ENCODE measurements at regions of chr19 and their contacts with region 1.

Region 1: DNA sequence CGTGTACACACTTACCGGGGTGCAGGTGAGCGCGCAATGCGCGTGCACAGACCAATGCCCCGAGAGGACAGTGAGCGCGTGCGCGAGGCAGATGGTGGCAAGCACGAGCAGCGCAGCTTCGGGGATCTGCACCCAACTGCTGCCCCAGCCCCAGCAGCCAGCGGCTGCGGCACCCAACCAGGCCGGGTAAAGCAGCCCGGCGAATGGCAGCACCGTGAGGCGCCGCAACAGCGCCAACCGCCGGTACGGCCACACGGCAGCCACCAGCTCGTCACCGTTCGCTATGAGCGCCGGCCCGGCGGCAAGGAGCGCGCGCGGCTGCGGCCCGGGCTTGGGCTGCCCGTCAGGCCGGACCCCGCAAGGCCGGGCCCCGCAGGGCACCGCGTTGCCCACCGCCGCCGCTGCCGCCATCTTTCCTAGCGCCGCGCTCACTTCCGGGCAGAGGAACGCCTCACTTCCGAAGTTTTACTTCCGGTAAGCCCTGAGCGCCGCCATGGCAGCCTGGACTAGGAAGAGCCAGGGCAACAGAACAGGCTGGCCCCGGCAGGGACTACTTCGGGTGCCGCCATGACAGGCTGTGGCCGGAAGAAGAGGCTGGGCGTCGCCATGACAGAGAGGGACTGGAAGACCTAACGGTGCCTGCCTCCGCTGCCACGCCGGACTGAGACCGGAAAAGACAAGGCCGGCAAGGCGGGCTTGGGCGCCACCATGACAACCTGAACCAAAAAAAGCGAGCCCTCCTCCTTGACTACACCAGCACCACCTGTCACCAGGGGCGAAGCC is at the start of gene ATP13A1:
- DNase-seq: peak; percentile 90
- ATAC-seq: peak; percentile 78
- H3K4me3 Mint-ChIP-seq: peak within 1 kb of the TSS; percentile 92
- H3K27ac Mint-ChIP-seq: peak within 1 kb of the TSS; percentile 98
- H3K4me1 Mint-ChIP-seq: peaks cover 44% of the 10 kb centered on the region
- H3K27me3 Mint-ChIP-seq: no peaks in the 10 kb centered on the region
- CTCF ChIP-seq: no peak
- total RNA-seq, gene ATP13A1: 125 and 135 TPM in 2 replicates

Region 2: DNA sequence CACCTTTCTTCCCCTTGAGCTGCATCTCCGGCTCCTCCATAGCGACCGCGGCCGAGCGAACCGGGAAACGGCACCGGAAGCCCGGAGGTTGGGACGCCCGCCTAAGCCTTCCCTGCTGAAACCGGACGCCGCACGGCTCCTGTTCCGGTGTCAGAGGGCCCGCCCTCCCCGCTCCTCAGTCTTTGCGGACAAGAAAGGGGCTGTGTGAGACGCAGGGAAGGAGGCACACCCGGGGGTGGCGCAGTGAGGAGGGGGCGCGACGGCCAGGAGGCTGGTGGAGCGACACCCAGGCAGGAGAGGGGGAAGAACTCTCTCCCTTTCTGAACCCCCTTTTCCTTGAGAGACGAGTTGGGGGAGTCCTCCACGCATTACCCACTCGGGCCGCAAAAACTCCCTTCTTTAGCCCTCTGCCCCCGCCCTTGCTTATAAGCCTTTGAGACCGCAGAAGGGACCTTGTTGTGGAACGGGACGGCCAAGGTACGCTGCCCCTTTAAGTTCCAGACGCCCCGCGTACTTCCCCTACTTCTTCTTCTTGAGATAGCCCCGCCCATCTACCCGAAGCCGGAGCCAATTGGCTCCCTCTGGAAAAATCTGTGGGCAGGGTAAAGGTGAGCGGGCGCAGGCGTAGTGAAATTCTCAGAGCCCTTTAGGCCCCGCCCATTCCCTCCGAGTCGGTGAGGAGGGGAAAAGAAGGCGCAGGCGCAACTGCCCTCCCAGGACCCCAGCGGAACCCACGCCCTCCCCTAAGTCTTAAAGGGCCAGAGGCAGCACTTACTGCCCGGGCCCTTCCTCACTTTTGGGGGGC is 471.2 kb before region 1 on chr19 and contains the starts of genes BORCS8 and RFXANK:
- CTCF ChIA-PET with region 1: no interaction called
- POLR2A ChIA-PET with region 1: interaction called, 3 read pairs
- intact Hi-C with region 1: loop called (anchors 1 kb)
- DNase-seq: peak; percentile 91
- ATAC-seq: peak; percentile 85
- H3K4me3 Mint-ChIP-seq: peak within 1 kb of the TSS; percentile 99
- H3K27ac Mint-ChIP-seq: peak within 1 kb of the TSS; percentile 99
- H3K4me1 Mint-ChIP-seq: peaks cover 49% of the 10 kb centered on the region
- H3K27me3 Mint-ChIP-seq: no peaks in the 10 kb centered on the region
- CTCF ChIP-seq: no peak
- total RNA-seq, gene BORCS8: 51.8 and 52.3 TPM in 2 replicates
- total RNA-seq, gene RFXANK: 95.4 and 96.9 TPM in 2 replicates

Region 3: DNA sequence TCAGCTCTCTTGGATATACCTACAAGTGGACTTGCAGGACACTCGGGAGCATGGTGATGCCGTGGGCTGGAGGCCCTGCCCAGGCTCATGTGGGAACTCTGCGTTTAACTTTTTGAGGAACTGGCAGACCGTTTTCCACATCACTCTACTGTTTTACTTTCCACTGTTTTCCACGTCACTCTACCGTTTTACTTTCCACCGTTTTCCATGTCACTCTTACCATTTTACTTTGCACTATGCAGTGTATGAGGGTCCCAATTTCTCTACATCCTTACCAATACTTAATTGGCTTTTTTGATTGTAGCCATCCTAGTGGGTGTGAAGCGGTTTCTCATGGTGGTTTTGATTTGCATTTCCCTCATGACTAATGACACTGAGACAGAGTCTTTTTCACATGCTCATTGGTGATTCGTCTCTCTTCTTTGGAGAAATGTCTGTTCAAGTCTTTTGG is 217.5 kb before region 1 on chr19:
- CTCF ChIA-PET with region 1: no interaction called
- POLR2A ChIA-PET with region 1: no interaction called
- intact Hi-C with region 1: no loop called
- DNase-seq: no peak
- ATAC-seq: peak; percentile 63
- H3K4me3 Mint-ChIP-seq: peak overlapping the region; percentile 71
- H3K27ac Mint-ChIP-seq: peak overlapping the region; percentile 78
- H3K4me1 Mint-ChIP-seq: peaks cover 61% of the 10 kb centered on the region
- H3K27me3 Mint-ChIP-seq: no peaks in the 10 kb centered on the region
- CTCF ChIP-seq: no peak

Region 4: DNA sequence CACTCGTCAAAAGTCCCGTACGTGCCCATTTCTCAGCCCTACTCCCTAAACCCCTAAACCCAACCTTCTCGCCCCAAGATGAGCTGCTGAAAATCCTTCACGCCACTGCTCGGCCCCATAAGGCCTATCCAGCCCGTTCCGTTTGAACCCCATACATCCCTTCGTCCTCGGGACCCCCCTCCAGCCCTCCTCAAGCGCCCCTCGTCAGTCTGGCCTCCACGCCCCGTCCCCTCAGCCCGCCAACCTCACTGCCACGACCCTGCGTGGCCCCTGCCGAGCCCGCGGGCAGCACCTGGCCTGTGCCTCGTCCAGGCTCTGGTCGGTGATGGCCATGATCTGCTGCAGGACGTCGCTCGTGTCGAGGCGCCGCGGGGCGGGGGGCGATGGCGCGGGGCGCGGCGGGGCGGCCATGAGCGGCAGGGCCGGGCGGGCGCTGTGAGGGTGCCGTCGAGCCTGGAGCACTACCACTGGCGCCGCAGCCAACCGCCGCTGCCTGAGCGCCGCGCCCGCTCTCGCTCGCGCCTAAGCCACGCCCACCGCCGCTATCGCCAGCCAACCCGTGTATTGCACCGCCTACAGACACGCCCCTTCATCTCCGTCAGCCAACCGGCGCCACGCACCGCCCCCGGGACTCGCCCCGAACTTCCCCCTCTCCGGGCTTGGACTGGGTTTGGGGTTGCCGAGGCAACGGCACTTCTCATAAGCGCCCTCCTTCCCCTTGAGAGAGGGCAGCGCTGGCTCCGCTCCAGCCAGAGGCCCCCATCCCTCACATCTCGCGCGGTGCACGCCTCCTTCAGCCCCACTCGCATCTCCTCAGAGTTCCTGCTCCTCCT is 45.0 kb before region 1 on chr19 and contains the start of gene PBX4:
- CTCF ChIA-PET with region 1: no interaction called
- POLR2A ChIA-PET with region 1: interaction called, 3 read pairs
- intact Hi-C with region 1: loop called (anchors 1 kb)
- DNase-seq: peak; percentile 98
- ATAC-seq: peak; percentile 95
- H3K4me3 Mint-ChIP-seq: peak within 1 kb of the TSS; percentile 85
- H3K27ac Mint-ChIP-seq: peak within 1 kb of the TSS; percentile 83
- H3K4me1 Mint-ChIP-seq: peaks cover 35% of the 10 kb centered on the region
- H3K27me3 Mint-ChIP-seq: no peaks in the 10 kb centered on the region
- CTCF ChIP-seq: no peak
- total RNA-seq, gene PBX4: 19.4 and 21.8 TPM in 2 replicates

Region 5: GRCh38 chr19:19677579-19677978 is 14.1 kb after region 1 on chr19:
- CTCF ChIA-PET with region 1: no interaction called
- POLR2A ChIA-PET with region 1: interaction called, 10 read pairs
- intact Hi-C with region 1: no loop called
- DNase-seq: no peak
- ATAC-seq: no peak
- H3K4me3 Mint-ChIP-seq: no peak overlapping the region
- H3K27ac Mint-ChIP-seq: no peak overlapping the region
- H3K4me1 Mint-ChIP-seq: peaks cover 12% of the 10 kb centered on the region
- H3K27me3 Mint-ChIP-seq: no peaks in the 10 kb centered on the region
- CTCF ChIP-seq: no peak

Region 6: GRCh38 chr19:19821366-19821951 is 158.0 kb after region 1 on chr19 and contains the start of gene ZNF506:
- CTCF ChIA-PET with region 1: interaction called, 3 read pairs
- POLR2A ChIA-PET with region 1: interaction called, 29 read pairs
- intact Hi-C with region 1: loop called (anchors 1 kb)
- DNase-seq: peak; percentile 85
- ATAC-seq: peak; percentile 87
- H3K4me3 Mint-ChIP-seq: peak within 1 kb of the TSS; percentile 98
- H3K27ac Mint-ChIP-seq: peak within 1 kb of the TSS; percentile 99
- H3K4me1 Mint-ChIP-seq: peaks cover 65% of the 10 kb centered on the region
- H3K27me3 Mint-ChIP-seq: no peaks in the 10 kb centered on the region
- CTCF ChIP-seq: no peak
- total RNA-seq, gene ZNF506: 67.1 and 78.6 TPM in 2 replicates

Region 7: DNA sequence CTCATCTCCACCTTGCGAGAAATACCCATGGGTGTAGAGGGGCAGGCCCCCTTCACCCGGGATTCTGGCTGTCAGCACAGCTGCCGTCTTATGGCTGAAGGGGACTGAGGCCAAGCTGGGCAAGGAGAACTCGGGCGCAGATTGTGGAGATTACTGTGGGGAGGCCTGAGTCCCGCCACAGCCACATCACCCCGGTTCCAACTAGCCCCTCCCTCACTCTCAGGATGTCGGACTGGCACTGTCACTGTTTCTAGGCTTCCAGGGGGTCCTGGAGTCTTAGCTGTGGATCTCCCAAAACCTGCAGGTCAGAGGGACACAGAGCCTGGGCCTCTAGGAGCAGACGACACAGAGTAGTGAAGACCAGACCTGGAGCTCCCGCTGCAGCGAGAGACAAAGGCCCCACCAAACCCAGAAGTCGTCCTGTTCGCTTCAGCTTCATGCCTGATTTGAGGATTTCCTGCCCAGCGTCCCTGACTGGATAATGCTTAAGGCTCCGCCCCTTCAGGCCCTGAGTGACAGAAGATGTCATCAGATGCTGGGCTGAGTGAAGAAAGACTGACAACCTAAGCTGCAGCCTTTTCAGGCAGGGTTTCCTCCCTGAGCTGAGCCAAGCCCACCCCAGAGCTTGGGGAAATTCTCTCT is 293.1 kb after region 1 on chr19:
- CTCF ChIA-PET with region 1: no interaction called
- POLR2A ChIA-PET with region 1: no interaction called
- intact Hi-C with region 1: loop called (anchors 2 kb)
- DNase-seq: no peak
- ATAC-seq: no peak
- H3K4me3 Mint-ChIP-seq: no peak overlapping the region
- H3K27ac Mint-ChIP-seq: no peak overlapping the region
- H3K4me1 Mint-ChIP-seq: peaks cover 7% of the 10 kb centered on the region
- H3K27me3 Mint-ChIP-seq: no peaks in the 10 kb centered on the region
- CTCF ChIP-seq: no peak

Region 8: GRCh38 chr19:20513179-20513934 is 849.9 kb after region 1 on chr19:
- CTCF ChIA-PET with region 1: no interaction called
- POLR2A ChIA-PET with region 1: no interaction called
- intact Hi-C with region 1: no loop called
- DNase-seq: no peak
- ATAC-seq: no peak
- H3K4me3 Mint-ChIP-seq: no peak overlapping the region
- H3K27ac Mint-ChIP-seq: no peak overlapping the region
- H3K4me1 Mint-ChIP-seq: no peaks in the 10 kb centered on the region
- H3K27me3 Mint-ChIP-seq: no peaks in the 10 kb centered on the region
- CTCF ChIP-seq: no peak

Measured in activated B cell treated with CpG ODN at 0.5 μM for 24 hours (primary cell).